ENCODE measurements at regions of chr12 and their contacts with region 1.

Region 1: DNA sequence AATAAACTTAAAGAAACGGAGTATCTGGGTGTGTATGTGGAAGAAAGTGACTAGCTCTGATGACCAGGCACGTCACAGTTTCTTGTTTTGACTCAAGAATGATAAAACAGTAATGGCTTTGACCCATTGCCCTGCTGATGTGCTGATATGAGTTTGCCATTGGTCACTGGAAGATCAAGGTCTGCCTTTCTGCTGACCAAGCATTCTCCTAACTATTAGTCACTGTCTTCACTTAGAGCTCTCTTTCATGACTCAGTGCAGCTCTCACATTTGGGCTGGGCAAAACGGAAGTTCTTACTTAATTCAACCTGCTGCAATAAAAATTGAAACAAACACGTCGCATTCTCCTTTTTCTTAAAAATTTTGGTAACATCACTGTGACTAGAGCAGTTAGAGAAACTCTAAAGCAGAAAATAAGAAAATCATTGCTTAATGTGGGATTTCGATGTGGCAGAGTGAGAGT is 366.7 kb downstream of the BTG1 start:
- DNase-seq: peak; percentile 68
- H3K4me3 Mint-ChIP-seq: peak overlapping the region; percentile 58
- H3K27ac Mint-ChIP-seq: peak overlapping the region; percentile 77
- H3K4me1 Mint-ChIP-seq: peaks cover 46% of the 10 kb centered on the region
- H3K27me3 Mint-ChIP-seq: no peaks in the 10 kb centered on the region

Region 2: DNA sequence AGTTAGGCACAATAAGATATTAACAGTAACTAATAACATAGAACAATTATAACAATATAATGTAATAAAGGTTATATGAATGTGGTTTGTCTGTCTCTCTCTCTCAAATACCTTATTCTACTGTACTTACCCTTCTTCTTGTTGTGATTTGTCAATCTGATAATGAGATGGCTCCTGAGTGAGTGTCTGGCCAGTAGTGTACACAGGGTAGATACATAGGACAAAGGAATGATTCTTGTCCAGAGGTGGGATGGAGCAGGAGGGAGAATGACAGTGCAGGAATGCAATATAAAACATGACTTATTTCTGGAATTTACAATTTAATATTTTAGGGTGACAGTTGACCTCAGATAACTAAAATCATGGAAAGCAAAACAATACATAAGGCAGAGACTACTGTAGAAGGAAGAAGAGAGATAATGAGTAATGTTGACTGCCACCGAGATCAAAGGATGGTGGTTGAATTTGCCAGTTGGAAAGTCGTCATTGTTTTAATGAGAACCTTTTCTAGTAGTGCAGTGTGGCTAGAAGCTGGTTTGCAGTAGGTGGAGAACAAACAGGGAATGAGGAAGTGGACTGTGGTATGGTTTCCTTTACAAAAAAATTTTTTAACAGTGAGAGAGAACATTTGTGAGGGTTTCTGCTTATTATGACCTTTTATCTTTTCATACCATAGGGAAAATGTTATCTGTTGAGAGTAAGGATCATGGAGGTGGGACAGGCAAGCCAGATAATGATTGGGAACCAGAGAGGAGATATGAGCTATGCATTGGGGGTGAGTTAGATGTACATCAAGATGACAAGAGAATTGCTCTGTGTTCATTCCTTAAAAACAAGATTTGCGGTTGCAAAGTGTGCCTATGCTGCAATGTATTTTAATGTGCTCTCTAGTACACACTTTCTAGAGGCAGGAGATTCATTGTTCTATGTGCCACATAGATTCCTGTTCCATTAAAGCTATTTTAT is 91.6 kb before region 1 on chr12:
- CTCF ChIA-PET with region 1: no interaction called
- intact Hi-C with region 1: loop called (anchors 1 kb)
- DNase-seq: peak; percentile 42
- H3K4me3 Mint-ChIP-seq: no peak overlapping the region
- H3K27ac Mint-ChIP-seq: peak overlapping the region; percentile 20
- H3K4me1 Mint-ChIP-seq: peaks cover 16% of the 10 kb centered on the region
- H3K27me3 Mint-ChIP-seq: no peaks in the 10 kb centered on the region

Region 3: GRCh38 chr12:91833780-91834359 is 54.9 kb after region 1 on chr12:
- CTCF ChIA-PET with region 1: no interaction called
- intact Hi-C with region 1: no loop called
- DNase-seq: no peak
- H3K4me3 Mint-ChIP-seq: no peak overlapping the region
- H3K27ac Mint-ChIP-seq: no peak overlapping the region
- H3K4me1 Mint-ChIP-seq: peaks cover 17% of the 10 kb centered on the region
- H3K27me3 Mint-ChIP-seq: no peaks in the 10 kb centered on the region

Region 4: DNA sequence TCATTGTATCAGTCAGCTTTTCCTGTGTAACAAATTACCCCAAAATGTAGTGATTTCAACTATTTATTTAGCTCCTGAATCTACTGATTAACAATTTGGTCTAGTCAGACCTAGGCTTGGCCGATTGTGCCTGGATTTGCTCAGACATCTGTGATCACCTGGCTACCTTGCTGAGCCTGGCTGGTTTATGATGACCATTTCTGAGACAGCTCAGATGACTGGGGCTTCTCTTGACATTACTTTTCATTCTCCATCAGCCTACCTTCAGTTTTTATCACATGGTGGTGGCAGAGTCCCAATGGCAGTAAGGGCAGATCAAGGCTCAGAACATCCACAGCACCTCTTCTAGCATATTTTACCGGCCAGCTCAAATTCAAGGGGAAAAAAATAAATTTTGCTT is 80.4 kb after region 1 on chr12:
- CTCF ChIA-PET with region 1: no interaction called
- intact Hi-C with region 1: no loop called
- DNase-seq: no peak
- H3K4me3 Mint-ChIP-seq: no peak overlapping the region
- H3K27ac Mint-ChIP-seq: no peak overlapping the region
- H3K4me1 Mint-ChIP-seq: peaks cover 49% of the 10 kb centered on the region
- H3K27me3 Mint-ChIP-seq: no peaks in the 10 kb centered on the region

Region 5: DNA sequence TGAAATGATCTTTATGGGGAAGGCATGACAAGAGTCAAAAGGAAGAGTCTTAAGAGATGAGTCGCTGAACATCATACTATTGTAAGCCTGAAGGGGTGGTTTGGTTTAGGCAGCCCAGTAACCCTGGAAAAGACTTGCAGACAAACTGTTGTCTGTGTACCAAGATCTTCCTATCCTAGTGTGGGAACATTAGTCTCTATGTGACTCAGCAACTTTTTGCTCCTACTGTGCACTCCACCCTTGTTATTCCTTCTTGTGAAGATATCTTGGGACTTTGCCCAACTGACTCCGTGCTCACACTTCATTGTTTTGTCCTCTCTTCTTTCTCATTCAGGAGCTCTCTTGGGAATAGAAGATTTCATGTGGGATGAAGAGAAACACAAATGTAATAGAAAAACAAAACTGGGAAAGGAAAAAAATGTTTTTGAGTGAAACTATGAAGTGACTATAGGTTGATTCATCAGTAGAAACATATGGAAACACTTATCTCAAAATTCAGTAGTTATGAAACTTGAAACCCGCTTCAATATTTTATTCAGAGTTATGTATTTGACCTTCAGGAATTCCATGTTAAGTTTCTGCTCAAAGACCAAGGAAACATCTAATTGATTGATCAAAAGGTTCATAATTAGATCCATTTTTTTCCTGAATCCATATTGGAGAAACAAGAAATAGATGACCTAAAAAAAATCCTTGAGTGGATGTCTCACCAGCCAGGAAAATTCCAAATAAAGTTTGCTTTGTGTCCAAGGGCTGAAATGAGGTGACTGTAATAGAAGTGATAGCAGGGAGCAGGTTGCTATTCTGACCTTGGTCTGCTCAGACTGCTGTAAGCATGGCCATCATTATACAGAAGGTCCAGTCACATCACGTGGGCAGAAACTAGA is 299.4 kb after region 1 on chr12:
- CTCF ChIA-PET with region 1: no interaction called
- intact Hi-C with region 1: loop called (anchors 5 kb)
- DNase-seq: peak; percentile 49
- H3K4me3 Mint-ChIP-seq: no peak overlapping the region
- H3K27ac Mint-ChIP-seq: peak overlapping the region; percentile 77
- H3K4me1 Mint-ChIP-seq: peaks cover 78% of the 10 kb centered on the region
- H3K27me3 Mint-ChIP-seq: no peaks in the 10 kb centered on the region

Region 6: GRCh38 chr12:92218394-92219077 is 439.6 kb after region 1 on chr12:
- CTCF ChIA-PET with region 1: no interaction called
- intact Hi-C with region 1: loop called (anchors 1 kb)
- DNase-seq: no peak
- H3K4me3 Mint-ChIP-seq: no peak overlapping the region
- H3K27ac Mint-ChIP-seq: peak overlapping the region; percentile 72
- H3K4me1 Mint-ChIP-seq: peaks cover 31% of the 10 kb centered on the region
- H3K27me3 Mint-ChIP-seq: no peaks in the 10 kb centered on the region

Region 7: DNA sequence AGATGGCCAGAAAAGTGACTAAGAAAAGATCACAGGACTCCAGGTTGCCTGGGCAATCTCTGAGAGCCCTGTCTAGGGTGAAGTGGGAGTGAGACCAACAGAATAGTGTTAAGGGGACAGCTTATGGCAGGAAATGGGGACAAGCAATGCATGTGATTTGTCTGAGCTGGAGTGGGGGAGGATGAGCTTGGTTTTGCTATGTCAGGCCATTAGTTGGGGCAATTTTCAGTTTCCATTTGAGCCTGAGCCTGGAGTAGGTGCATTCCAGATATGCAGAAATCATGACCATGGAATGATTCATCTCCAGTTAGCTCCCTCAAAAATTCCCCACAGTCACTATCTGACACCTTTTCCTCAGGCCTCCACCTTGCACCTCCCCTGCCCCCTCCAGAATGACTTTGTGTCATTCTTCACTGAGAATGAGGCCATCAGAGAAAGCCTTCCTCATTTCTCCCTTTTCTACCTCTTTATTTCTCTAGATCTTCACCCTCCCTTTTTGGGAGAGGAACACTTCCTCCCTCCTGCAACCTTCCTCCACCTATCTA is 773.0 kb after region 1 on chr12:
- CTCF ChIA-PET with region 1: no interaction called
- intact Hi-C with region 1: loop called (anchors 5 kb)
- DNase-seq: peak; percentile 83
- H3K4me3 Mint-ChIP-seq: no peak overlapping the region
- H3K27ac Mint-ChIP-seq: no peak overlapping the region
- H3K4me1 Mint-ChIP-seq: peaks cover 38% of the 10 kb centered on the region
- H3K27me3 Mint-ChIP-seq: no peaks in the 10 kb centered on the region

Measured in activated naive CD4-positive, alpha-beta T cell treated with anti-CD3 and anti-CD28 coated beads for 36 hours (primary cell).